Activated CD8-positive, alpha-beta memory T cell treated with anti-CD3 and anti-CD28 coated beads, Interleukin-2, amount 10 ng/mL, durations not matched to agents 7 days and 5 days (primary cell): ENCODE measurements at regions of chr14 and their contacts with region 1.

Region 1: GRCh38 chr14:102316743-102317563 is 2.6 kb upstream of the ZNF839 start:
- DNase-seq: peak; percentile 95
- ATAC-seq: peak; percentile 72
- H3K4me3 Mint-ChIP-seq: peak overlapping the region; percentile 79
- H3K27ac Mint-ChIP-seq: peak overlapping the region; percentile 90
- H3K4me1 Mint-ChIP-seq: peaks cover 65% of the 10 kb centered on the region
- H3K27me3 Mint-ChIP-seq: no peaks in the 10 kb centered on the region

Region 2: GRCh38 chr14:102039157-102039556 is 277.8 kb before region 1 on chr14:
- CTCF ChIA-PET with region 1: no interaction called
- DNase-seq: no peak
- ATAC-seq: no peak
- H3K4me3 Mint-ChIP-seq: no peak overlapping the region
- H3K27ac Mint-ChIP-seq: no peak overlapping the region
- H3K4me1 Mint-ChIP-seq: no peaks in the 10 kb centered on the region
- H3K27me3 Mint-ChIP-seq: no peaks in the 10 kb centered on the region

Region 3: GRCh38 chr14:102063091-102063802 is 253.7 kb before region 1 on chr14:
- CTCF ChIA-PET with region 1: interaction called, 12 read pairs
- DNase-seq: peak; percentile 81
- ATAC-seq: peak; percentile 89
- H3K4me3 Mint-ChIP-seq: no peak overlapping the region
- H3K27ac Mint-ChIP-seq: no peak overlapping the region
- H3K4me1 Mint-ChIP-seq: peaks cover 11% of the 10 kb centered on the region
- H3K27me3 Mint-ChIP-seq: peaks cover 7% of the 10 kb centered on the region

Region 4: DNA sequence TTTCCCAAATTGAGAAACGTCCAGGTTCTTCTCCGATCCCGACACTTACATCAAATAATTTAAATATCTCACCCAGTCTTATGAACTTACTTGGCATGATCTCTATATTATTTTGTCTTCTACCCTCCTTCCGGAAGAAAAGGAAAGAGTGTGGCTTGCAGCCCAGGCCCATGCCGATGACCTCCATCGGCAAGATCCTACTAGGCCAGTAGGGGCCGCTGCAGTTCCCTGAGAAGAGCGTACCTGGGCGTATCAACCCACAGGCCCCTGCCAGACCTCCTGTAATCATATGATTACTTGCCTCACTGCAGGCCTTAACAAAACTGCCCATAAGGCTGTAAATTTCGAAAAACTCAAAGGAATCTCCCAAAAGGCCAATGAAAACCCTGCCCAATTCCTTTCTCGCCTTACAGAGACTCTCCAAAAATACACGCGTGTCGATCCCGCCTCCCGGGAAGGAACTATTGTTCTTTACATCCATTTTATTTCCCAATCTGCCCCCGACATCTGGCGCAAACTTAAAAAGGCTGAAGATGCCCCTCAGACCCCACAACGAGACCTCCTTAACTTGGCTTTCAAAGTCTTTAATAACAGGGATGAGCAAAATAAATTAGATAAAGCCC is 81.6 kb before region 1 on chr14:
- CTCF ChIA-PET with region 1: interaction called, 16 read pairs
- DNase-seq: peak; percentile 84
- ATAC-seq: peak; percentile 99
- H3K4me3 Mint-ChIP-seq: no peak overlapping the region
- H3K27ac Mint-ChIP-seq: no peak overlapping the region
- H3K4me1 Mint-ChIP-seq: no peaks in the 10 kb centered on the region
- H3K27me3 Mint-ChIP-seq: no peaks in the 10 kb centered on the region

Region 5: GRCh38 chr14:102279688-102280348 is 37.1 kb before region 1 on chr14:
- CTCF ChIA-PET with region 1: no interaction called
- DNase-seq: no peak
- ATAC-seq: no peak
- H3K4me3 Mint-ChIP-seq: no peak overlapping the region
- H3K27ac Mint-ChIP-seq: no peak overlapping the region
- H3K4me1 Mint-ChIP-seq: no peaks in the 10 kb centered on the region
- H3K27me3 Mint-ChIP-seq: no peaks in the 10 kb centered on the region

Region 6: GRCh38 chr14:102516531-102517415 is 199.8 kb after region 1 on chr14:
- CTCF ChIA-PET with region 1: interaction called, 15 read pairs
- DNase-seq: peak; percentile 67
- ATAC-seq: peak; percentile 85
- H3K4me3 Mint-ChIP-seq: peak overlapping the region; percentile 73
- H3K27ac Mint-ChIP-seq: peak overlapping the region; percentile 28
- H3K4me1 Mint-ChIP-seq: peaks cover 6% of the 10 kb centered on the region
- H3K27me3 Mint-ChIP-seq: peaks cover 16% of the 10 kb centered on the region